ENCODE measurements at regions of chr9 and their contacts with region 1.

Region 1: DNA sequence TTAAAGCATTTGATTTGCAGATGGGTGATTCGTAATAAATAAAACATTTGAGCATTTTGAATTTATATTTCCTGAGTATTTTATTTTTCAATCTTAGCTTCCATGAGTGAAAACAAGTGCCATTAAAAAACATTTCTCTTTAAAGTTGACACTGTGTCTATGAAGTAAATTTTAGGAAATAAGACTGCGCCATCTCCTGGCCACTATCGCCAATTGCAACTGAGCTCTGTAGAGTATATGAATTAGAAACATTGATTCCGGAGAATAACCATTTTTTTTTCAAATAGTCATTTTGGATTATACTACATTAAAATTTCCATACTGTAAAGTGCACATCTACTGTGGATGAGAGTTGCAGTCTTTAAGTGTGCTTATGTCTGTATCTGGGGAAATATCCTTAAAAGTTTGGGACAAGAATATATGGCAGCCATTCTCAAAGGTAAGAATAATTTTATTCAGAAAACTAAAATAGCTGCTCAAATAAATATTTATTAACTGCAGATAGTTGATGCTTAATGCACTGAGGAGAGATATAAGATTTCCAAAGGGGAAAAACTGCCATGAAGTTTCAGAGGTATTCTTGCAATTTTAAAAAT is 5.9 kb downstream of the DMRTA1 start:
- DNase-seq: no peak
- CTCF ChIP-seq: peak; percentile 66

Region 2: GRCh38 chr9:22244141-22245011 is 208.1 kb before region 1 on chr9:
- CTCF ChIA-PET with region 1: interaction called, 18 read pairs
- POLR2A ChIA-PET with region 1: no interaction called
- DNase-seq: peak; percentile 14
- CTCF ChIP-seq: peak; percentile 67

Region 3: GRCh38 chr9:22307013-22307711 is 145.4 kb before region 1 on chr9:
- CTCF ChIA-PET with region 1: interaction called, 14 read pairs
- POLR2A ChIA-PET with region 1: no interaction called
- DNase-seq: no peak
- CTCF ChIP-seq: peak; percentile 34

Region 4: DNA sequence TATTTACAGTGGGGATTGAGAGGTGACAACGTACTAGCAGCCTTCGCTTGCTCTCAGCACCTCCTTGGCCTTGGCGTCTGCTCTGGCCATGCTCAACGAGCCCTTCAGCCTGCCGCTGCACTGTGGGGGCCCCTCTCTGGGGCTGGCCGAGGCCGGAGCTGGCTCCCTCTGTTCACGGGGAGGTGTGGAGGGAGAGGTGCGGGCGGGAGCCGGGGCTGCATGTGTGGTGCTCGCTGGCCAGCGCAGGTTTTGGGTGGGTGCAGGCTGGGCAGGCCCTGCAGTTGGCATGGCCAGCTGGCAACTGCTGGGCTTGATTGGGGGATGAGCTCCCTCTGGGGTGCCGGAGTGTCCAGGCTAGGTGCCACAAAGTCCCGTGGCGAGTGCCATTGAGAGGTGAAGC is 11.7 kb before region 1 on chr9:
- CTCF ChIA-PET with region 1: interaction called, 12 read pairs
- POLR2A ChIA-PET with region 1: no interaction called
- DNase-seq: no peak
- CTCF ChIP-seq: no peak

Region 5: GRCh38 chr9:22469928-22470544 is 17.5 kb after region 1 on chr9:
- CTCF ChIA-PET with region 1: interaction called, 12 read pairs
- POLR2A ChIA-PET with region 1: no interaction called
- DNase-seq: no peak
- CTCF ChIP-seq: peak; percentile 66

Region 6: DNA sequence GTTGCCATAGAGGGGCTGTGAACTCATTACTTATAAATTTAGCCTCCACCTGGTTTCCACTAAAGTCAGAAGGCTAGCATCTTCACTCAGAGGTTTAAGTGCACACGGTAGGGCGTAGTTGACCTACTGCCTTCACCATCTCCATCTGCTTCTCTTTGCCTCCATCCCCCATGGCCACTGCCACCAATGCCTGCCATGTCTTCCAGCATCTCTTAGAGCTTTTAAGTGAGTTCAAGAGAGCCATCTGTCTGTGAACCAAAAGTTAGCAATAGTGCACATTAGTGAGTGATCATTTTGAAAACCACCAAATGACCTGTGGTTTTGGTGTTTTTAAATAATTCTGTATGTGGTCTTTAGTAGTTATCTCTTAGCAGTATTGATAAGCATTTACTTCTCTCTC is 96.1 kb after region 1 on chr9:
- CTCF ChIA-PET with region 1: no interaction called
- POLR2A ChIA-PET with region 1: no interaction called
- DNase-seq: no peak
- CTCF ChIP-seq: no peak